Head of caudate nucleus (tissue), 42 donors: ENCODE measurements at regions of chr9 and their contacts with region 1.

Region 1: GRCh38 chr9:77456829-77457437 is 191.2 kb downstream of the GNA14 start:
- DNase-seq: peak; percentile 32 to 95 (median 86)

Region 2: GRCh38 chr9:77616191-77616590 is 159.3 kb after region 1 on chr9:
- intact Hi-C with region 1: no loop called
- DNase-seq: no peak

Region 3: GRCh38 chr9:77751341-77752091 is 294.6 kb after region 1 on chr9:
- intact Hi-C with region 1: loop called (anchors 10 kb)
- DNase-seq: peak in 14 of 42 donors; percentile 36 to 82 (median 68)